ENCODE measurements at regions of chr1 and their contacts with region 1.

Region 1: DNA sequence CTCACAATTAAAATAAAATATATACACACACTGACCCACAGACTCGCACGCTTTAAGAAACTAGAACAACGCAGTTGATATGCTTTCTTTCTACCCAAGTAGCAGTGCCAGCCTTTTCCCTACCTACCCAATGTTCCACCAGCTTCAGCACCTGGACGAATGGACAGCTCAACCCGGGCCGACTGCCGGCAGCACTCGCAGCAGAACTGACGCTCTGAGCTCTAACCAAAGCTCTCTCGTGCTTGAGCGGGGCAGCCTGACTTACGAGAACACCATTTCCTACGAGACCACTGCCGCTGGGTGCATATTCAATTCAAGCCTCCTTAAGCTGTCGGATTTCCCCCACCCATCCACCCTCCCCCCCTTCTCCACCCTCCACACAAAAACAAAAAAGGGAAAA is 127.4 kb upstream of the DPYD start:
- DNase-seq: peak; percentile 84
- H3K4me3 ChIP-seq: peak overlapping the region; percentile 34 to 62 (median 60)
- H3K27ac ChIP-seq: no peak overlapping the region
- H3K4me1 ChIP-seq: peaks cover 32% of the 10 kb centered on the region
- H3K27me3 ChIP-seq: no peaks in the 10 kb centered on the region
- CTCF ChIP-seq: peak in 1 of 2 donors; percentile 6
- POLR2A ChIP-seq: no peak

Region 2: GRCh38 chr1:97137862-97138514 is 910.3 kb before region 1 on chr1:
- CTCF ChIA-PET with region 1: interaction called, 12 read pairs
- POLR2A ChIA-PET with region 1: no interaction called
- dilution Hi-C with region 1: no loop called
- intact Hi-C with region 1: loop called (anchors 2 kb)
- DNase-seq: peak; percentile 95
- H3K4me3 ChIP-seq: no peak overlapping the region
- H3K27ac ChIP-seq: peak overlapping the region; percentile 27
- H3K4me1 ChIP-seq: peaks cover 10% of the 10 kb centered on the region
- H3K27me3 ChIP-seq: no peaks in the 10 kb centered on the region
- CTCF ChIP-seq: peak; percentile 52 to 65
- POLR2A ChIP-seq: no peak

Region 3: DNA sequence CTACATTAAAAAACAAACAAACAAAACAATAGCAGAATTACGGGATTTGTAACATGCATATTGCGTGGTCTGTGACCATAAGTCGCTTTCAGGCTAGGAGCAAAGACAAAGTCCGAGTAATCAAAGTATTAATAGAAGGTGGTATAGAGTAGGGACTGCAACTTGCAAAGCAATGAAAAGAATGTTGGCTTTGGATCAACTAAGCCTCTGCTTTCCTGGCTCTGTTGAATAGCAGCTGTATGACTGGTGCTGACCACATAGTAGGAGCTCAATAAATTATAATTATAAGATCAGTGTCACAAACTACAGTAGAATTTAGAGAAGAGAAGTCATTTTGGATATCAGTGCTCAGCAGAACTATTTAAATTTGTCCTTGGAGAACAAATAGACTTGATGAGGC is 713.8 kb before region 1 on chr1:
- CTCF ChIA-PET with region 1: no interaction called
- POLR2A ChIA-PET with region 1: no interaction called
- dilution Hi-C with region 1: no loop called
- intact Hi-C with region 1: loop called (anchors 10 kb)
- DNase-seq: peak; percentile 13
- H3K4me3 ChIP-seq: no peak overlapping the region
- H3K27ac ChIP-seq: no peak overlapping the region
- H3K4me1 ChIP-seq: no peaks in the 10 kb centered on the region
- H3K27me3 ChIP-seq: no peaks in the 10 kb centered on the region
- CTCF ChIP-seq: no peak
- POLR2A ChIP-seq: no peak

Region 4: DNA sequence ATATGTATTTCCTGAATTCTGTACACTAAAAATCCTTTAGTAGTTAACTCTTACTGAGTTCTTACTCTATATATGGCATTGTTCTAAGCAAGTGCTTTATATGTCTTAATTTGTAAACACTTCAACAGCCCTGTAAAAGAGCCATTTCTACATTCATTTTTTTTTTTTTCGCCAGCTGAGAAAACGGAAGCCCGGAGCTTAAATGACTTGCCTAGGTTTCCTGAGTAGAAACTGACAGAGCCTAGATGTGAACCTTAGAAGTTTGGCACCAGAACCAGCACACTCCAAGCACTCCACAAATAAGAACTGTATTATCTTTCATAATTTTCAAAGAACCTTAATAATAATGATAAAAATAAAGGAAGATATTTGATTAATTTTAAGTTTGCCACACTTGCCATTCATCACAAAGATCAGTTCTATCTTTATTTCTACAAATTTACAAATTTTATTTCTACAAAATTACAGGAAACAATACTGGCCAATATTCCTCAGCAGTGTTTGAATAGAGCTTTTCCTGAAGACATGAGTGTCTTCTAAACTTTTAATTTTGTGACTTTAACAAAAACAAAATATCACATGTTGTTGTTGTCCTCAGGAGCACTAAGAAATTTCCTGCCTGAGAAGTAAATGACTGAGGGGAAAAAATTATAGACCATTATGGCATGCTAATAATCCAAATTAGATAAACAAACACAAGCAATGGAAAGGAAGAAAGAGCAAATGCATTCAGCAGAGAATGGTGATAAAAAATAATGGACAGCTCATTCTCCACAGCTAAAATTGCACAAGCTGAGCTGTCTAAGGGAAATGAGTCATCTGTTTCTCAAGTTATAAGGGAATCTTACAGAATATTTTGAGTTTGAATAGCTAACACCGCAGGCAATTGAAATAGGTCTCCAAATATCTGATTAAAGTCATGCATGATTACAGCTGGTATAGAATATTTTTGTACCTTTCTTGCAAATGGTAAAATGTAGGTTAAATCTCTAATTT is 198.6 kb before region 1 on chr1:
- CTCF ChIA-PET with region 1: interaction called, 4 read pairs
- POLR2A ChIA-PET with region 1: no interaction called
- dilution Hi-C with region 1: no loop called
- intact Hi-C with region 1: loop called (anchors 2 kb)
- DNase-seq: peak; percentile 93
- H3K4me3 ChIP-seq: peak overlapping the region in 1 of 3 experiments; percentile 49
- H3K27ac ChIP-seq: peak overlapping the region; percentile 68
- H3K4me1 ChIP-seq: peaks cover 24% of the 10 kb centered on the region
- H3K27me3 ChIP-seq: no peaks in the 10 kb centered on the region
- CTCF ChIP-seq: no peak
- POLR2A ChIP-seq: peak; percentile 23

Region 5: DNA sequence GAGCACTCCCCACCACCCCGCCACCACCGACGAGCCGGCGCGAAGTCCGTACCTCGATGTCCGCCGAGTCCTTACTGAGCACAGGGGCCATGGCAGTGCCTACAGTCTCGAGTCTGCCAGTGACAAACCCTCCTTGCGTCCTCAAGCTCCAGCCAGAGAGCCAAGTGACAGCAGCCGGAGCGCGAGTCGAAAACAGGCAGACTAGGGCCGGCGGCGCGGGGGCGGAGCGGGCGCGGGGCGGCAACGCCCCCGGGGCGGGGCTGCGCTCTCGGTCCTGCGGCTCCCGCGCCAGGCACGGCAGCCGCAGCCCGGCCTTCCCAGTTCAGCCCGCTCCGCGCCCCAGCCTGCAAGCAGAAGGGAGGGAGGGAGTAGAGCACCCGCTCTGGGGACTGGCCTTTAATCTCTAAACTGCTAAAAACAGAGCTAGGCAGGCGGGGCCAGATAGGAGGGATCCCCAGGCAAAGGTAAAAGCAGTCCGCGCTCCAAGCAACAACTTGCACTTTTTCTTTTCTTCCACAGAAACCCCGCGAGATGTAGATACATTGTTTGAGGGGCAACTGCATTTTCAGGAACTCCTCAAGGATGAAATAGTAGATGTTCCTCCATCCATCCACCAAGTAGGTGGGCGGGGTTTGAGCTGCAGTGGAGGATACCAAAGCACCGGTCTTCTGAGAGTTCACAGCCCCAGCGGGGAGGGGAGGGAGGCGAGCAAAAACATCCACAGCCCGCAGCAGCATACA is 127.2 kb before region 1 on chr1 and contains the start of gene DPYD:
- CTCF ChIA-PET with region 1: interaction called, 8 read pairs
- POLR2A ChIA-PET with region 1: interaction called, 3 read pairs
- dilution Hi-C with region 1: no loop called
- intact Hi-C with region 1: loop called (anchors 1 kb)
- DNase-seq: peak; percentile 87
- H3K4me3 ChIP-seq: peak within 1 kb of the TSS; percentile 94 to 97 (median 97)
- H3K27ac ChIP-seq: peak within 1 kb of the TSS; percentile 77
- H3K4me1 ChIP-seq: peaks cover 13% of the 10 kb centered on the region
- H3K27me3 ChIP-seq: no peaks in the 10 kb centered on the region
- CTCF ChIP-seq: no peak
- POLR2A ChIP-seq: peak; percentile 41
- total RNA-seq, gene DPYD: 15.1 and 17.9 TPM in 2 replicates